GM18951 (cell line): ENCODE measurements at regions of chr7 and their contacts with region 1.

Region 1: DNA sequence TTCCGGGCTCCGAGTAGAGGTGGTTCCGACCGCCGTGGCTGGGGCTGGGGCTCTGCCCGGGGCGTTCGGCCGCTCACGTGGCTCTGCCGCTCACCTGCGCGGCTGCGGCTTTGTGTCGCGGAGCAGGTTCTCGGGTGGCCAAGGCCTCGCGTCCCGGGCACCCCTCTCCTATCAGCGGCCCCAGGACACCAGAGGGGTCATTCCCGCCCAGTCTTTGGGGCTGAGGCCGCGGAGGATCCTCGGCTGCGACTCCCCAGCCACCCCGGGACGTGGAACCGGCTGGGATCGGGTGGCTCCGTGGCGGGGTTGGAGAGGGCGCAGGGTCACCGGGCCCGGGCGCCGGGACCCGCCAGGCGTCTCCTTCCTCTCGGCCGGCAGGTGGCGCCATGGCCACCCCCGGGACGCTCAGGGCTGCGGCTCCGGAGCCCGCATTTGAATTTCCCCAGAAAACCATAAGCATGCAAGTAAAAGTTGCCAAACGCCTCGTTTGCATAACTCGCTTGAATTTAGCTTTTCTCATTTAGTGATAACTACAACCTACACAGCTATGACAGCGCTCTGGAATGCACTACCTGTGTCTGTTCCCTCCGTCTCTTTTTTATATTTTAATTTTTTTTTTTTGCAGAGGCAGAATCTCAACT is 1.2 kb downstream of the COL26A1 start:
- POLR2A ChIP-seq: no peak

Region 2: DNA sequence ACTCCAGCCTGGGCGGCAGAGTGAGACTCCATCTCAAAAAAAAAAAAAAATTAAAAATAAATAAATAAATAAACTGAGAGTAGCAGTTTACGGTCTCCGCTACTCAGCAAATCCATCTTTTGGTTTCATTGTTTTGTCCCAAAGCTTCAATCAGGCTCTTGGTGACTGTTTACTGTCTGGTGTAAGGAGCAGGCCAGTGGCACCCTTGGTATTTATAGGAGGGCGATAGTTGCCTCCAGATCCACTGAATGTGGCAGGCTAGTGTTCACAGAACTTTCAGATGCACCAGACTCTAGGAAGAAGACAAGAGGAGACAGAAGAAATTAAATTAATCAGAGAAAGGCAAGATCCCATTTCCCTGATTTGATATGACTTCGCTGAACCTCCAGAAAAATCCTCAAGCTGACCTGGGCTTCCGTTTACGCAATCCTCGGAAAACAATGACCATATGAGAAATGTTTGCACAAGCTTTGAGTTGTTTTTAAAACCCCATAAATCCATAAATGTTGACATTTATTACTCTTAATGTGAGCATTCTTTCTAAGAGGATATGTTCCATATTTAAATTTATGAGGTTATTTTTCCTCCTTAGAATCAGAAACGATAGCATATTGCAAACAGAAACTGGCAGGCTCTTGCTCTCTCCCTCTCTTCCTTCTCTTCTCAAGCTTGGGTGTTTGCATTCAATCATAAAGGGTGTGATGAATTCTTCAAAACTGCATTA is 421.6 kb before region 1 on chr7:
- in situ Hi-C with region 1: no loop called
- POLR2A ChIP-seq: no peak

Region 3: DNA sequence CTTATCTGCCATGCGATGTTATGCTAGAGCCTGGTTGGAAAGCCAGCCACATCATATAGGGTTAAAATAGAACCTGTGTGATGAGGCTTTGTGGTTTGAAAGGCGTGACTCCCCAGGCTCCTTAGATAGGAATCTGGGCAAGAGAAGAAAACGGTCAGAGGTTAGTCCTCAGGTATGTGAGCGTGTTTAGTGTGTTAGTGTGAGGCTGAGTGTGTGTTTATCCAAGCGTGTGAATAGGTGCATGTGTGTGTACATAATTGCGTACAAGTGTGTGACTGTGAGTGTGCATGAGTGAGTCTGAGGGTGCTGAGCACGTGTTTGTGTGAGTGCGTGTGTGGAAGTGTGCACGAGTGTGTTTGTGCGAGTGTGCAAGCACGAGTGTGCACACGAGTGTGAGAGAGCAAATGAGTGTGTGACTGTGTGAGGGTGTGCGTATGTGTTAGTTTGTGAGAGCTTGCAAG is 78.7 kb after region 1 on chr7:
- in situ Hi-C with region 1: loop called (anchors 10 kb)
- POLR2A ChIP-seq: no peak